ENCODE measurements at regions of chrX and their contacts with region 1.

Region 1: DNA sequence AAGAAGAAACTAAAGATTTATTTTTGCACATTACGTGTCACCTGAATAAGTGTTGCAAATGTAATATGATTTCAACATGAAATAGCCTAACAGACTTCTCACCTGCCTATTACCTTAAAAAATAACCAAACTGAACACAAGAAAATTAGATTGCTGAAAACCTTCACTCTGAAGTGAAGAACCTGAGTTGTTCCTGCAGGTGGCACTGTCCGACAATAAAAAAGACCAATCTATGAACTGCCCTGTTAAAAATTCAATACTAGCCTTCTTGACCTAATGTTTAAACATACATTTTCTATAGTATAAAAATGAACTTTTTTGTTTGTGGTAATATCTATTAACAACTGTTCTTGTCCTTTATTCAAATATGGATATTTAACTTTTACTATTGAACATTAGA is 69.2 kb upstream of the PNPLA4 start:
- DNase-seq: peak in 1 of 2 donors; percentile 11
- ATAC-seq: no peak
- H3K4me3 ChIP-seq: no peak overlapping the region
- H3K27ac ChIP-seq: no peak overlapping the region
- H3K4me1 ChIP-seq: no peaks in the 10 kb centered on the region
- H3K27me3 ChIP-seq: no peaks in the 10 kb centered on the region
- CTCF ChIP-seq: peak; percentile 12 to 72 (median 61)

Region 2: DNA sequence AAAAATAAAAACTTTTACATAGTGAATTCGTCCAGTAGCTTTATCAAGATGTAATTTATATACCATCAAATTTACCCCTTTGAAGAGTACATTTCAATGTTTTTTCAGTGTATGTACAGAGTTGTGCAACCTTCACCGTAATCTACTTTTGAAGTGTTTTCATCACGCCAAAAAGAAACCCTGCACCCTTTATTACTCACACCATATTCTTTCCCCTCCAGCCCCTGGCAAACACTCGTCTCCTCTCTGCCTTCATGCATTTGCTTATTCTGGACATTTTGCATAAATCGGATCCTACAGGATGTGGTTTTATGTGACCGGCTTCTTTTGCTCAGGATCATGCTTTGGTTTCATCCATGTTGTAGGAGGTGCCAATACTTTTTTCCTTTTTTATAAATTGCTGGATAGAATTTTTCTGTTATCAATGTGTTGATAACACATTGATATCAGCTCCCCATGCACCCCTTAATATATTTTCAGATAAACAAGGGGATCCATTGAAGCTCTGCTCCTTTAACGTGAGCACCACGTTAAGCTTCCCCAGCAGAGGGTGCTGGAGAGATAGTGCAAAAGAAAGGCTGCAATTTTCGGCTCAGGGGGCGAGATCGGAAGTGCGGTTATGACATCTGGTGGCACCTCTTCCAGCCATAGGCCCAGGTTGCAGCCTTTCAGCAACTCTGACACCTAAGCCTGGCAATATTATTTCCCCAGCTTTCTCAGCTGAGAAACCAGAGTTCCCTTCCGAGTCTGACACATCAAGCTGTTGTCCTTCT is 368.1 kb after region 1 on chrX:
- intact Hi-C with region 1: loop called in 3 of 10 experiments (anchors 10 kb)
- DNase-seq: no peak
- ATAC-seq: no peak
- H3K4me3 ChIP-seq: no peak overlapping the region
- H3K27ac ChIP-seq: no peak overlapping the region
- H3K4me1 ChIP-seq: peaks cover 0 to 10% (median 0%) of the 10 kb centered on the region in 9 donors
- H3K27me3 ChIP-seq: no peaks in the 10 kb centered on the region
- CTCF ChIP-seq: peak in 8 of 9 donors; percentile 18 to 56 (median 42)

Region 3: GRCh38 chrX:8815464-8816065 is 819.2 kb after region 1 on chrX:
- intact Hi-C with region 1: loop called in 5 of 10 experiments (anchors 5 to 10 kb)
- DNase-seq: peak in 1 of 2 donors; percentile 13
- ATAC-seq: no peak
- H3K4me3 ChIP-seq: no peak overlapping the region
- H3K27ac ChIP-seq: no peak overlapping the region
- H3K4me1 ChIP-seq: no peaks in the 10 kb centered on the region
- H3K27me3 ChIP-seq: peaks cover 0 to 22% (median 0%) of the 10 kb centered on the region in 7 donors
- CTCF ChIP-seq: peak; percentile 15 to 81 (median 67)

Measured in heart right ventricle (tissue), 16 donors.